Endothelial cell of umbilical vein (primary cell): ENCODE measurements at regions of chr1 and their contacts with region 1.

Region 1: GRCh38 chr1:161389691-161390558 is 22.2 kb upstream of the CFAP126 start:
- DNase-seq: peak; percentile 96
- H3K4me3 ChIP-seq: peak overlapping the region; percentile 15 to 72 (median 64)
- H3K27ac ChIP-seq: peak overlapping the region; percentile 64
- H3K4me1 ChIP-seq: peaks cover 3% of the 10 kb centered on the region
- H3K27me3 ChIP-seq: no peaks in the 10 kb centered on the region
- CTCF ChIP-seq: no peak
- POLR2A ChIP-seq: peak; percentile 95

Region 2: DNA sequence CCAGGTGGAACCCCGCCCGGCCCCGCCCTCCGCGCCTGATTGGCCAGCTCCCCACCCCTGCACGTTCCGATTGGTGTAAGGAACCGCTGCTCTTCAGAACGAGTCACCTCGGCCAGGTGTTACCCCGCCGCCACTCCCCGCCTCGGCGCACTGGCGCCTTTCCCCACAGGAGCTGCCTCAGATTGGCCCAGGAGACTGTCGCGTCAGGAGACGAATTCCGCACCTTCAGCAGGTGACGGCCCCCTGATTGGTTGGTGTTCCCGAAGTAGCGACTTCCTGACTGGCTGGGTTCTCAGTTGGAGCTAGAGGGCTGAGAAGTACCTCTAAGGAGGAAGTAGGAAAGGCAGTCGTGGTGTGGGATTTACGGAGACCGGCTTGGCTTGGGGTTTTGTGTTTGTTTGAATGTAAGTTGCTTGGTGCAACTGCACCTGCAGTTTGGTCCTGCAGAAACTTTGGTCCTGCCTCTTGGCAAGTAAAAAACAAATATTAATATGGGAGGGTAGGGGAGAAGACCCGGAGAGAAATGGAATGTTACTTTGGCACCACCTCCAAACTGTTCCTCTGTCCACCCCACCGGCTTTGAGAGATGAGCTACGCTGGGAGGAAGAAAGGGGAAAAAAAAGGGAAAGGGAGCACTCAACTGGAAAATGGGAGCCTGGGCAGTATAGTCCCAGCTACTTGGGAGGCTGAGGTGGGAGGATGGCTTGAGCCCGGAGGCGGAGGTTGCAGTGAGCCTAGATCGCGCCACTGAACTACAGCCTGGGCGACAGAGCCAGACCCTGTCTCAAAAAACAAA is 368.6 kb before region 1 on chr1:
- CTCF ChIA-PET with region 1: no interaction called
- POLR2A ChIA-PET with region 1: no interaction called
- dilution Hi-C with region 1: no loop called
- intact Hi-C with region 1: loop called (anchors 10 kb)
- DNase-seq: peak; percentile 84
- H3K4me3 ChIP-seq: peak overlapping the region; percentile 70 to 87 (median 77)
- H3K27ac ChIP-seq: no peak overlapping the region
- H3K4me1 ChIP-seq: peaks cover 39% of the 10 kb centered on the region
- H3K27me3 ChIP-seq: no peaks in the 10 kb centered on the region
- CTCF ChIP-seq: no peak
- POLR2A ChIP-seq: no peak

Region 3: GRCh38 chr1:161427733-161428516 is 38.0 kb after region 1 on chr1:
- CTCF ChIA-PET with region 1: no interaction called
- POLR2A ChIA-PET with region 1: no interaction called
- dilution Hi-C with region 1: no loop called
- intact Hi-C with region 1: no loop called
- DNase-seq: peak; percentile 25
- H3K4me3 ChIP-seq: no peak overlapping the region
- H3K27ac ChIP-seq: no peak overlapping the region
- H3K4me1 ChIP-seq: peaks cover 3% of the 10 kb centered on the region
- H3K27me3 ChIP-seq: peaks cover 13 to 17% of the 10 kb centered on the region in 2 experiments
- CTCF ChIP-seq: no peak
- POLR2A ChIP-seq: no peak